Activated CD4-positive, alpha-beta memory T cell treated with anti-CD3 and anti-CD28 coated beads, Interleukin-2, amount 10 ng/mL, durations not matched to agents 7 days and 5 days (primary cell): ENCODE measurements at regions of chr1 and their contacts with region 1.

Region 1: GRCh38 chr1:148372731-148373130 is 110.4 kb downstream of the PPIAL4G start:
- DNase-seq: peak; percentile 58
- H3K4me3 Mint-ChIP-seq: peak overlapping the region; percentile 45
- H3K27ac Mint-ChIP-seq: peak overlapping the region; percentile 95
- H3K4me1 Mint-ChIP-seq: peaks cover 35% of the 10 kb centered on the region
- H3K27me3 Mint-ChIP-seq: no peaks in the 10 kb centered on the region

Region 2: GRCh38 chr1:148388260-148389027 is 15.7 kb after region 1 on chr1:
- CTCF ChIA-PET with region 1: interaction called, 12 read pairs
- POLR2A ChIA-PET with region 1: interaction called, 57 read pairs
- DNase-seq: peak; percentile 91
- H3K4me3 Mint-ChIP-seq: peak overlapping the region; percentile 86
- H3K27ac Mint-ChIP-seq: peak overlapping the region; percentile 95
- H3K4me1 Mint-ChIP-seq: peaks cover 38% of the 10 kb centered on the region
- H3K27me3 Mint-ChIP-seq: no peaks in the 10 kb centered on the region